Heart left ventricle (tissue), 16 donors: ENCODE measurements at regions of chr2 and their contacts with region 1.

Region 1: DNA sequence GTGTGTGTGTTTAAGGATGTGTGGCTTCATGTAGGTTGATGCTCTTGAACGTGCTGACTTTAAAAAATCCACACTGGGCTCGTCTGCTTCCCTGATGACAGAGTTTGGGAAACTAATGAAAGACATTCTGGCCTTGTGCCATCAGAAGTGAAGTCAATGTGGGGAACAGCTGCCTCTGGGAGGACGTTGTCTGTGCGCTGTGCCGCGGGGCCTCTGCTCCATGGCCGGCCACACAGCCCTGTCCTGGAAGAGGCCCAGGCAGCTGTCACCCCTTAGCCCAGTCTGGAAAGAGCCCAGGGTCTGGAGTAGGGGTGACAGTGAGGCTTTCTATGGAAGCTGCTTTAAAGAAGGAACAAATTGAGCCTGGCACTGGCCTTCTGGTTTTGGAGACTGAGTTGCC is 155.8 kb downstream of the SH3RF3 start:
- DNase-seq: peak; percentile 53 to 78 (median 72)
- ATAC-seq: peak; percentile 70 to 90 (median 80)
- H3K4me3 ChIP-seq: no peak overlapping the region
- H3K27ac ChIP-seq: peak overlapping the region in 3 of 12 donors; percentile 6 to 48 (median 24)
- H3K4me1 ChIP-seq: peaks cover 7 to 52% (median 31%) of the 10 kb centered on the region in 12 donors
- H3K27me3 ChIP-seq: no peaks in the 10 kb centered on the region
- CTCF ChIP-seq: no peak
- POLR2A ChIP-seq: no peak

Region 2: DNA sequence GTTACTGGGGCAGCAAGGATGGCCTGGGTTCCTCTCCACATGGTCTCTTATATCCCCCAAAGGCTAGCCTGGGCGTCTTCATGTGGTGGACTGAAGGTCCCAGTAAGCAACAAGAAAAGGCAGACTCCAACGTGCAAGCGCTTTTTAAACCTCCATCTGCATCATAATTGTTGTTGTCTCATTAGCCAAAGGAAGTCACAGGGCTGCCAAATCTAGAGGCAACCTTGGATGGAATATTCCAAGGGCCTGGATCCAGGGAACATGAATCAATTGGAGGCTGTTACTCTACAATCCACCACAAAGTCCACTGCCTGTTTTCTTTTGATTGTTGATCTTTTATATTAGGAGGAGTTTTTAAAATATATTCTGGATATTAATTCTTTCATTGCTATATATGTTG is 37.0 kb before region 1 on chr2:
- intact Hi-C with region 1: loop called in 1 of 10 experiments (anchors 2 kb)
- DNase-seq: no peak
- ATAC-seq: peak in 1 of 4 donors; percentile 66
- H3K4me3 ChIP-seq: no peak overlapping the region
- H3K27ac ChIP-seq: peak overlapping the region in 3 of 12 donors; percentile 21 to 46 (median 26)
- H3K4me1 ChIP-seq: peaks cover 10 to 56% (median 37%) of the 10 kb centered on the region in 12 donors
- H3K27me3 ChIP-seq: no peaks in the 10 kb centered on the region
- CTCF ChIP-seq: no peak
- POLR2A ChIP-seq: no peak

Region 3: GRCh38 chr2:109331896-109332848 is 47.3 kb after region 1 on chr2:
- intact Hi-C with region 1: loop called in 1 of 10 experiments (anchors 5 kb)
- DNase-seq: peak; percentile 66 to 88 (median 75)
- ATAC-seq: peak; percentile 83 to 96 (median 94)
- H3K4me3 ChIP-seq: peak overlapping the region in 7 of 12 donors; percentile 2 to 40 (median 34)
- H3K27ac ChIP-seq: peak overlapping the region in 10 of 12 donors; percentile 8 to 74 (median 56)
- H3K4me1 ChIP-seq: peaks cover 0 to 61% (median 20%) of the 10 kb centered on the region in 12 donors
- H3K27me3 ChIP-seq: no peaks in the 10 kb centered on the region
- CTCF ChIP-seq: no peak
- POLR2A ChIP-seq: peak in 1 of 2 donors; percentile 15

Region 4: DNA sequence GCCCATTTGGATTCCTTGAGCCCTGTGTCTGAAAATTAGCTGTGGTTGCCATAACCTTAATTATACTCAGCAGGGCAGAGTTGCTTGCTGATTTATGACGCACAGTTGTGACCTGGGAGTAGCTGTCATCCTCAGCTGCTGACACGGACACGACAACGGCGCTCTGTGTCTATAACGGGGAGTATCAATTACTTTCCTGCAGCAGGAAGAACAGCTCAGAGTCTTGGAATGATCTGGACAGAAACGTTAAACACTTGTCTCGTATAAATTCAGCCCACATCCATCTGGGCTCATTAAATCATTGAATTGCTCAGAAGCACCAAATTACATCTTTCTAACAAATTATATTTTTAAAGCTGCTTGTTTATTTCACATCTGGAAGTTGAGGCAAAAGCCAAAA is 212.6 kb after region 1 on chr2:
- intact Hi-C with region 1: loop called in 3 of 10 experiments (anchors 5 to 10 kb)
- DNase-seq: no peak
- ATAC-seq: peak in 2 of 4 donors; percentile 30 to 54
- H3K4me3 ChIP-seq: no peak overlapping the region
- H3K27ac ChIP-seq: peak overlapping the region in 1 of 12 donors; percentile 28
- H3K4me1 ChIP-seq: peaks cover 0 to 24% (median 12%) of the 10 kb centered on the region in 12 donors
- H3K27me3 ChIP-seq: no peaks in the 10 kb centered on the region
- CTCF ChIP-seq: no peak
- POLR2A ChIP-seq: no peak